Activated naive CD4-positive, alpha-beta T cell treated with anti-CD3 and anti-CD28 coated beads, Interleukin-2, amount 10 ng/mL, durations not matched to agents 7 days and 5 days (primary cell): ENCODE measurements at regions of chr1 and their contacts with region 1.

Region 1: DNA sequence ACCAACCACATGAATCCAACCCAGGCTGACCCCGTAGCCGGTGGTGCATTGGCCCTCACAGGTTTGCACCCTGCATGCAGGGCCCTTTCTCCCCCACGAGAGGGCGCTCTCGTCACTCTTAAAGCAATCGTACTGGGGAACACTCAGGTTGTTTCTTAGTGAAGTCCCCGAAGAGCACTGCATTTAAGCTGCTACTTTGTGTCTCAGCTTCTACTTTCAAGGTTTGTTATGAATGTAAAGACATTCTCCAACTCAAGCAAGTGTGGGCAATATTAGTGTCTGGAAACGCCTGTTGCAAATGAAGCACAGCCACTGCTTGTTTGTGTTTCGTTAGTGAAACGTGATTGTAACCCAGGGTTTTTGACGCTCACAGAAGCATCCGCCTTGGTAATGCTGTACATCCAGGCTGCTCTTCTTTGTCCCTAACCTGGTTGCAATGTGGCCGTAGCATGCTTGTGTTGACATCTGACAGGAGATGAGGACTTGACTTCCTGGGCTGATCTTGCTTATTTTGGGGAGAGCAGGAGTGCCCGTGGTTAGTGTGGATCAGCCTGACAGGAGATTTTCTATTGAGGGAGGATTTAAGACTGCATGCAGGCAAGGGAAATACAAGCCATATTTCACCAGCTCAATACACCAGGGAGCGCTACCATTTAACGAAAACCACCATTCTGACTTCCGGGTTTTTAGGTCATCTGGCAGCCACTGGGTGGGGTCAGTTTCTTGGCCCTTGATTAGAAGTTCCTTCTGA is 79.8 kb downstream of the ST6GALNAC3 start:
- DNase-seq: peak; percentile 87
- H3K4me3 Mint-ChIP-seq: peak overlapping the region; percentile 77
- H3K27ac Mint-ChIP-seq: peak overlapping the region; percentile 88
- H3K4me1 Mint-ChIP-seq: peaks cover 14% of the 10 kb centered on the region
- H3K27me3 Mint-ChIP-seq: peaks cover 3% of the 10 kb centered on the region

Region 2: GRCh38 chr1:76048219-76048618 is 106.2 kb before region 1 on chr1:
- CTCF ChIA-PET with region 1: no interaction called
- DNase-seq: no peak
- H3K4me3 Mint-ChIP-seq: no peak overlapping the region
- H3K27ac Mint-ChIP-seq: no peak overlapping the region
- H3K4me1 Mint-ChIP-seq: peaks cover 2% of the 10 kb centered on the region
- H3K27me3 Mint-ChIP-seq: peaks cover 7% of the 10 kb centered on the region

Region 3: DNA sequence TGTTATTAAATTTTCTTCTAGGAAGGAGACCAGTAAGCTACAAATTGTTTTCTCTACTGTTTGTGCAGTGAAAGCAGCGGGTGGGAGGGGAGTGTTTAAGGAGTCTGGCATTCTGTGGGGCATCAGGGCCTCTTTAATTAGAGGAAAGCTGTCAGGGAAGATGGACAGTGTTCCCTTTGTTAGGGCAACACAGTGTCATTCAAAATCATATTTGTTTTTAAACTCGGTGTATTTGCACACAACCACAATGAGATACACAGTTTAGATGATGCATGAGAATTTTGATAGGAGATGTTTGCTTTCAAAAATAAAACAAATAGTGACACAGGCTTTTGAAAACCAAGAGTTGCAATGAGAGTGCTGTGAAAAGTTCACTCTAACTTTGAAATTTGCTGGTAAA is 94.9 kb before region 1 on chr1:
- CTCF ChIA-PET with region 1: no interaction called
- DNase-seq: no peak
- H3K4me3 Mint-ChIP-seq: no peak overlapping the region
- H3K27ac Mint-ChIP-seq: no peak overlapping the region
- H3K4me1 Mint-ChIP-seq: no peaks in the 10 kb centered on the region
- H3K27me3 Mint-ChIP-seq: peaks cover 2% of the 10 kb centered on the region

Region 4: GRCh38 chr1:76294482-76295194 is 140.3 kb after region 1 on chr1:
- CTCF ChIA-PET with region 1: interaction called, 18 read pairs
- DNase-seq: no peak
- H3K4me3 Mint-ChIP-seq: peak overlapping the region; percentile 60
- H3K27ac Mint-ChIP-seq: peak overlapping the region; percentile 90
- H3K4me1 Mint-ChIP-seq: peaks cover 75% of the 10 kb centered on the region
- H3K27me3 Mint-ChIP-seq: no peaks in the 10 kb centered on the region

Region 5: GRCh38 chr1:76330991-76331603 is 176.7 kb after region 1 on chr1:
- CTCF ChIA-PET with region 1: interaction called, 31 read pairs
- DNase-seq: peak; percentile 58
- H3K4me3 Mint-ChIP-seq: no peak overlapping the region
- H3K27ac Mint-ChIP-seq: no peak overlapping the region
- H3K4me1 Mint-ChIP-seq: peaks cover 5% of the 10 kb centered on the region
- H3K27me3 Mint-ChIP-seq: no peaks in the 10 kb centered on the region

Region 6: GRCh38 chr1:77126307-77126706 is 971.9 kb after region 1 on chr1:
- CTCF ChIA-PET with region 1: interaction called, 27 read pairs
- DNase-seq: peak; percentile 41
- H3K4me3 Mint-ChIP-seq: no peak overlapping the region
- H3K27ac Mint-ChIP-seq: no peak overlapping the region
- H3K4me1 Mint-ChIP-seq: no peaks in the 10 kb centered on the region
- H3K27me3 Mint-ChIP-seq: no peaks in the 10 kb centered on the region